Tibial artery (tissue), 4 donors: ENCODE measurements at regions of chr4 and their contacts with region 1.

Region 1: GRCh38 chr4:173500841-173501591 is 29.0 kb downstream of the HAND2 start:
- DNase-seq: no peak
- H3K4me3 ChIP-seq: peak overlapping the region; percentile 17 to 38
- H3K27ac ChIP-seq: no peak overlapping the region
- H3K4me1 ChIP-seq: peaks cover 0 to 9% (median 5%) of the 10 kb centered on the region in 4 donors
- H3K27me3 ChIP-seq: peaks cover 0 to 41% of the 10 kb centered on the region in 2 donors
- CTCF ChIP-seq: no peak

Region 2: GRCh38 chr4:173398779-173399415 is 102.1 kb before region 1 on chr4 and contains the start of gene SCRG1:
- intact Hi-C with region 1: no loop called
- DNase-seq: peak in 1 of 2 donors; percentile 81
- H3K4me3 ChIP-seq: peak within 1 kb of the TSS; percentile 35 to 41
- H3K27ac ChIP-seq: peak within 1 kb of the TSS; percentile 72
- H3K4me1 ChIP-seq: peaks cover 0 to 61% (median 16%) of the 10 kb centered on the region in 4 donors
- H3K27me3 ChIP-seq: no peaks in the 10 kb centered on the region
- CTCF ChIP-seq: no peak

Region 3: GRCh38 chr4:173466101-173466500 is 34.9 kb before region 1 on chr4:
- intact Hi-C with region 1: no loop called
- DNase-seq: no peak
- H3K4me3 ChIP-seq: no peak overlapping the region
- H3K27ac ChIP-seq: peak overlapping the region in 1 of 2 donors; percentile 34
- H3K4me1 ChIP-seq: peaks cover 0 to 30% (median 0%) of the 10 kb centered on the region in 4 donors
- H3K27me3 ChIP-seq: no peaks in the 10 kb centered on the region
- CTCF ChIP-seq: no peak

Region 4: GRCh38 chr4:173538148-173538908 is 37.3 kb after region 1 on chr4:
- intact Hi-C with region 1: loop called (anchors 5 kb)
- DNase-seq: peak; percentile 26 to 81
- H3K4me3 ChIP-seq: peak overlapping the region; percentile 55 to 56
- H3K27ac ChIP-seq: peak overlapping the region; percentile 73 to 81
- H3K4me1 ChIP-seq: peaks cover 0 to 25% (median 9%) of the 10 kb centered on the region in 4 donors
- H3K27me3 ChIP-seq: peaks cover 0 to 2% of the 10 kb centered on the region in 2 donors
- CTCF ChIP-seq: no peak

Region 5: GRCh38 chr4:173573286-173573685 is 72.3 kb after region 1 on chr4:
- intact Hi-C with region 1: no loop called
- DNase-seq: no peak
- H3K4me3 ChIP-seq: no peak overlapping the region
- H3K27ac ChIP-seq: no peak overlapping the region
- H3K4me1 ChIP-seq: no peaks in the 10 kb centered on the region
- H3K27me3 ChIP-seq: no peaks in the 10 kb centered on the region
- CTCF ChIP-seq: no peak

Region 6: GRCh38 chr4:173990126-173990868 is 489.3 kb after region 1 on chr4:
- intact Hi-C with region 1: loop called (anchors 5 kb)
- DNase-seq: no peak
- H3K4me3 ChIP-seq: no peak overlapping the region
- H3K27ac ChIP-seq: no peak overlapping the region
- H3K4me1 ChIP-seq: no peaks in the 10 kb centered on the region
- H3K27me3 ChIP-seq: no peaks in the 10 kb centered on the region
- CTCF ChIP-seq: peak; percentile 30 to 43